ENCODE measurements at regions of chr11 and their contacts with region 1.

Region 1: DNA sequence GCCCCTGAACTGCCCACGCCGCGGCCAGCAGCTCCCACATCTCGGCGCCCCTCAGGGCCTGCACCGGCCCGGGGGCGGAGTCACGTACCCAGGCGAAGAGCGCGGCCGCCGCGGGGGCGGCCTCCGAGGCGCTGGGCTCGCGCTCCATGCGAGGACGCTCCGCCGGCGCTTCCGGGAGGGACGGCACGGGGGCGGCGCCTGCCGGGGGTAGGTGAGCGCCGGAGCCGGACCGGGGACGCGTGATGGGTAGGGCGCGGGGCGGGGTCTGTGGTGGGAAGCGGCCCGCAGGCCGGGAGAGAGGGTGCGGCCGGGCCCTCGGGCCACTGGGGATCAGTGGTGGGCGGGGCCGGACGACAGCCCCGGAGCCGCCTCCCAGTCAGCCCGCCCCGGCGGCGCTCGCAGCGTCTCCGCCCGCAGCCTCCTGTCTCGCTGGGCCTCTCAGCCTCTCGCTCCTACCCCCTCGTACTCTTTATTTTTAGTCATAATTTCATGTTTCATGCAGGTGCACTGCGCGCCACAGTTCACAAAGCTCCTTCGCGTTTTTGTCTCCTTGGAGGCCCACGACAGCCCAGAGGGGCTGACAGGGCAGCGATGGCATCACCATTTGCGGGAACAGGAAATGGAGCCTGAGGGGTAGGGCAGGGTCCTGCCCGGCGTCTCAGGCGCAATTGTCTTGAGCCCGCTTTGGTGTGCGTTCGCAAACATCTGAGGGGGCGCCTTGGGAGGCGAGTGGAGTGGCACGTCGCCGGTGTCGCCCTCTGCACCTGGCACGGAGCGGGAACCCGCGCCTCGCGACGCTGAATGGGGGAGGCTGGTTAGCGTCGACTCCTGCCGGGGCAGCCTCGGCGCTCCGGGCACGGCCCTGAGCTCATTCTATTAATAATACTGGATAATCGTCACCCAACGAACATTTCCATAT is at the start of gene SERGEF:
- DNase-seq: peak; percentile 95 to 97
- ATAC-seq: peak; percentile 96 to 98 (median 98)
- H3K4me3 ChIP-seq: peak within 1 kb of the TSS; percentile 96
- H3K27ac ChIP-seq: peak within 1 kb of the TSS; percentile 91
- H3K4me1 ChIP-seq: peaks cover 6% of the 10 kb centered on the region
- H3K27me3 ChIP-seq: no peaks in the 10 kb centered on the region
- CTCF ChIP-seq: no peak
- total RNA-seq, gene SERGEF: 17.9 to 28.3 (median 25.1) TPM

Region 2: DNA sequence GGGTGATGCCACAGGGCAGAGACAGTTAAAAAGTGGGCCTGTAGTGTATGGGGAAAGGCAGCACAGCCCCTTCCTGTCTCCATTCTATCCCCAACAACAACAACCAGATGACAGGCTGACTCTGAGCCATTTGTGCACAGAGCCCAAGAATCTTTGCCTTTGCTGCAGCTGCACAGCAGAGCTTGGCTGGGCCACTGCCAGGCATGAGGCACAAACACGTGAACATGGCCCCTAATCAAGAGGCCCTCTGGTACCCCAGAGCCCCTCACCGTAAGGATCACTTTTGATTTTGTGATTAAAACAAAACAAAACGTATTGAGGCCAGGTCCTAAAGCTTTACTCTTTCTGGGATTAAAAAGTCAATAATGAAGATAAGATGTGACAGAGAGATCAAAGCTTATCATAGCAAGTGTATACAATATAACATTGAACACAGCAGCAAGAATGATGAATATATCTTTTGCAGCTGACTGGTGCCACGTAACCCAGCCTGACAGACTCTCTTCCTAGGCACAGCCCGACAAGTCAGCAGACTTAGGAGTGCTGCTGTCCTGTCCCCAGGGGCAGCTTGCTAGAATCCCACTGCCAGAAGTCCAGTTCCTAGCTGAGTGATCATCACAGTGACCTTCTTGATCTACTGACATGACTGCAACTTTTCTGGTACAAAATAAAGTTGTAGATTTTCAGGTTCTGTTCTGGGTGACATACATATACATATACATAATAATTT is 118.0 kb before region 1 on chr11:
- intact Hi-C with region 1: no loop called
- DNase-seq: no peak
- ATAC-seq: no peak
- H3K4me3 ChIP-seq: no peak overlapping the region
- H3K27ac ChIP-seq: no peak overlapping the region
- H3K4me1 ChIP-seq: no peaks in the 10 kb centered on the region
- H3K27me3 ChIP-seq: no peaks in the 10 kb centered on the region
- CTCF ChIP-seq: no peak

Region 3: DNA sequence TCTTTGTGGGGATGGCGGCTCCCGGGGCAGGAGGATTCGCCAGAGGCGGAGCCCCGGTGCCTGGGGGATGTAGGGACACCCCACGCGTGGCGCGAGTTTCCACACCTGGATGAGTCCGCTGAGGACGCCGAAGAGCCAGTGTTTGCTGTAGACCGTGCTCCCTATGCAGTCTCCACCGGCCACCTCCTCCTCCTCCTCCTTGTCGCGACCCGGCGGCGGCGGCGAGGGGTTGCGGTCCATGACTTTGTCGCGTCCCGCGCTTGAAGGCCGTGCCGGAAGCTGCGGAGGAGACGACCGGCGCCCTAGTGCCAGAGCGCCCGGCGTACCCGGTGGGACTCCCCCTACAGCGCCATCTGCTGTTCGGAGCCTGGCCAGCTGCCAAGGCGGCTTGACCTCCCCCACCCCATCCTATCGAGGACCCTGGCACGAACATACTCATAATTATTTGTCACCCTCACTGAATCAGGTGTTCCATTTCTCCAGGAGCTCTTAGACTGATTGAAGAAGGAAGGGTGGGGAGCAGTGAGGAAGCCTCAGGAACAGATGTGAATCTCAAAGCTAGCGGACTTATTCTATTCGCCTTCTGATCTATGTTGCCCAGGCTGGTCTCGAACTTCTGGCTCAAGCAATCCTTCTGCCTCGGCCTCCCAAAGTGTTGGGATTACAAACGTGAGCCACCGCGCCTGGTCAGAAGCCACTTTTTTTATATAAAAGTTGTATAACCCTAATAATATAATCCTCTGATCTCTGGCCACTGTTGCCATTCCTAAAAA is 92.9 kb after region 1 on chr11 and contains the start of gene SAAL1:
- intact Hi-C with region 1: loop called in 1 of 2 experiments (anchors 10 kb)
- DNase-seq: peak; percentile 83 to 92
- ATAC-seq: peak; percentile 95 to 100 (median 98)
- H3K4me3 ChIP-seq: peak within 1 kb of the TSS; percentile 92
- H3K27ac ChIP-seq: peak within 1 kb of the TSS; percentile 73
- H3K4me1 ChIP-seq: peaks cover 9% of the 10 kb centered on the region
- H3K27me3 ChIP-seq: no peaks in the 10 kb centered on the region
- CTCF ChIP-seq: peak; percentile 64
- total RNA-seq, gene SAAL1: 3.5 to 6.5 (median 4.6) TPM

Region 4: GRCh38 chr11:18310800-18311340 is 297.7 kb after region 1 on chr11:
- intact Hi-C with region 1: loop called in 1 of 2 experiments (anchors 10 kb)
- DNase-seq: no peak
- ATAC-seq: no peak
- H3K4me3 ChIP-seq: no peak overlapping the region
- H3K27ac ChIP-seq: no peak overlapping the region
- H3K4me1 ChIP-seq: no peaks in the 10 kb centered on the region
- H3K27me3 ChIP-seq: no peaks in the 10 kb centered on the region
- CTCF ChIP-seq: no peak

Measured in psoas muscle (tissue), 8 donors.